ENCODE measurements at regions of chr16 and their contacts with region 1.

Region 1: DNA sequence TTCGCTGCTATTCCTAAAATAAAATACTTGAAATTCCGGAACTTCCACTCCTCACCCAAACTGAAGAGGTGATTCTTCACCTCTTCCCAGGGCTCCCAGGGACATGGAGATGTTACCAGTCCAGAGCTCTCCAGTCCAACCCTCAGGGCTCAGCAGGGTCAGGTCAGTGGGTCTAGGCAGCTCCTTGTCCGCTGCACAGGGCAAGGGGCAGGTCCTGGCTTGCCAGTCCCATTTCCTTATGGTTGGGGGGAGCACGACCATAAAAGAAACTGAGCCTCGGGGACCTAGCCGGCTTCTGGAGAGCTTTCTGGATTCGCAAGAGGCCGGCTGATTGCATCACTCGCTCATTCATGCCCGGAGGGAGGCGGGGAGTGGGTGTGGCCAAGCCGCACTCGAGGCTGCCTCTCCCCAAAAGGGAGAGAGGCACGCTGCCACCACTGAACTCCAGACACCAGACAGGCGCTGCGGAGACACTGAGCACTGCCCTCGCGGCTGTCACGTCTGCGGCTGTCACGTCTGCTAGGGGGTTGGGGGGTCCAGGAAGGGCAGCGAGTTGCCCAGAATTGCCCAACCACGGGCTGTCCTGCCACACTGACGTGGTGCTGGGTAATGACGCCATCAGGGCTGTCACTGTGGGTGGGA is 15.8 kb downstream of the SLC7A5 start:
- DNase-seq: peak; percentile 79
- ATAC-seq: peak; percentile 78
- H3K4me3 ChIP-seq: peak overlapping the region; percentile 0 to 23; a peak in 2 of 4 replicates
- H3K27ac ChIP-seq: peak overlapping the region; percentile 81
- H3K4me1 ChIP-seq: peaks cover 32 to 38% of the 10 kb centered on the region in 2 experiments
- H3K27me3 ChIP-seq: no peaks in the 10 kb centered on the region
- CTCF ChIP-seq: no peak
- POLR2A ChIP-seq: peak; percentile 54
- RAD21 ChIP-seq: no peak

Region 2: GRCh38 chr16:87806603-87807546 is 46.7 kb before region 1 on chr16:
- CTCF ChIA-PET with region 1: interaction called, 10 read pairs
- POLR2A ChIA-PET with region 1: interaction called, 6 read pairs
- RAD21 ChIA-PET with region 1: interaction called in 1 of 2 experiments, 3 read pairs
- intact Hi-C with region 1: loop called (anchors 2 kb)
- DNase-seq: peak; percentile 77
- ATAC-seq: peak; percentile 90
- H3K4me3 ChIP-seq: peak overlapping the region; percentile 51 to 66
- H3K27ac ChIP-seq: peak overlapping the region; percentile 71
- H3K4me1 ChIP-seq: peaks cover 21 to 23% of the 10 kb centered on the region in 2 experiments
- H3K27me3 ChIP-seq: no peaks in the 10 kb centered on the region
- CTCF ChIP-seq: no peak
- POLR2A ChIP-seq: no peak
- RAD21 ChIP-seq: no peak

Region 3: GRCh38 chr16:87836844-87837581 is 16.5 kb before region 1 on chr16:
- CTCF ChIA-PET with region 1: interaction called, 12 read pairs
- POLR2A ChIA-PET with region 1: no interaction called
- RAD21 ChIA-PET with region 1: no interaction called
- intact Hi-C with region 1: no loop called
- DNase-seq: no peak
- ATAC-seq: 0 out of 2 replicates have a peak, but pooled peaks have one; percentile 13
- H3K4me3 ChIP-seq: no peak overlapping the region
- H3K27ac ChIP-seq: no peak overlapping the region
- H3K4me1 ChIP-seq: no peaks in the 10 kb centered on the region
- H3K27me3 ChIP-seq: no peaks in the 10 kb centered on the region
- CTCF ChIP-seq: no peak
- POLR2A ChIP-seq: no peak
- RAD21 ChIP-seq: no peak

Region 4: DNA sequence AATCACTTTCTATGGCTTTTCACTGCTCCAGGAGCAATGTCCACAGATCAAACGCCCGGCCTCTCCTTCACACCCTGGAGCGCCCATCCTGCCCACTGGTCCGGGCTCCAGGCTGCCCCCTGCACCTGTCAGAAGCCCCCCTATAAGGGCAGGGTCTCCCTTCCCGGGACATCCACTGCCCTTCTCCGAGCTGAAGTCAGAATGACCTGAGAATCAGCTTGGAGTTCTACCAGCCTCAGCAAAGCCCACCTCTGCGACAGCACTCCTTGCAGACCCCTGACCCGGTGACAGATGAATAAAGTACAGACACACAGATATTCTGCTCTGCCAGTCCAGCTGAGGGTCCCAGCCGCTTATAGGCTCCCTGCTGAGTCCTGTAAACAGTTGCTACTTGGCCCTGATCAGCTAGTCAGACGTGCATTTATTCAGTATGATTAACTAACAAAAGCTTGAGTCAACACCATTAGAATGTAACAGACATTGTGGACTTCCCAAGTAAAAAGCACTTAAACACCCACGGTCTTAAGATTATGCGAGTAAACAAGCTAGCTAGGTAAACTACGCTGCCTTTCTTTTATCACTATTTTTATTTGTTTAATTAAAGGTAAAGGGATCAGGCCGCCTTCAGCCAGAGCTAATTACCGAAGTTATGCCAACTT is 10.9 kb after region 1 on chr16:
- CTCF ChIA-PET with region 1: interaction called, 8 read pairs
- POLR2A ChIA-PET with region 1: interaction called, 12 read pairs
- RAD21 ChIA-PET with region 1: interaction called in 1 of 2 experiments, 12 read pairs
- intact Hi-C with region 1: no loop called
- DNase-seq: no peak
- ATAC-seq: no peak
- H3K4me3 ChIP-seq: no peak overlapping the region
- H3K27ac ChIP-seq: peak overlapping the region; percentile 16; the same call in 1 of the 2 replicates
- H3K4me1 ChIP-seq: peaks cover 28 to 60% of the 10 kb centered on the region in 2 experiments
- H3K27me3 ChIP-seq: no peaks in the 10 kb centered on the region
- CTCF ChIP-seq: no peak
- POLR2A ChIP-seq: no peak
- RAD21 ChIP-seq: no peak

Measured in HCT116 (cell line).